ENCODE measurements at regions of chrX and their contacts with region 1.

Region 1: GRCh38 chrX:86806788-86807187 is 658.5 kb downstream of the DACH2 start:
- DNase-seq: peak; percentile 3
- ATAC-seq: no peak
- H3K4me3 ChIP-seq: no peak overlapping the region
- H3K27ac ChIP-seq: no peak overlapping the region
- H3K4me1 ChIP-seq: no peaks in the 10 kb centered on the region
- H3K27me3 ChIP-seq: no peaks in the 10 kb centered on the region
- CTCF ChIP-seq: 0 out of 2 replicates have a peak, but pooled peaks have one; percentile 21
- POLR2A ChIP-seq: no peak
- RAD21 ChIP-seq: no peak

Region 2: DNA sequence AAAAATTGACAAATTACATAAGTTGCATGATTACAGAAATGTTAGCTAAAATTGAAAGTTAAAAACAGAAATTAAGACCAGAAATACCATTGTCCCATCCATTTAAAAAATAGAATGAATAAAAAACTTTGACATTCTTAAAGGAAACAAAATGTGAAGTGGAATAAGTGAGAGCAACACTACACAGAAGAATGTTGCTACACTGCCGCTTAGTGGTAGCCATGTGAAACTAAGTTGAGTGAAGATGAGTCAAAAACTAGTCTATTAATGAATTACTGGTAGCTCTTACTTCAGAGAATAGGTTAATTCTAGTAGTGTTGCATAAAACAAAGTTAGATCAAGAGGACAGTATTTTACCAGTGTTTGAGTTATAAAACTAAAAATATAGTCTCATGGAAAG is 139.8 kb after region 1 on chrX:
- CTCF ChIA-PET with region 1: no interaction called
- POLR2A ChIA-PET with region 1: no interaction called
- dilution Hi-C with region 1: no loop called
- in situ Hi-C with region 1: no loop called
- intact Hi-C with region 1: loop called (anchors 10 kb)
- DNase-seq: peak; percentile 24
- ATAC-seq: peak; percentile 73
- H3K4me3 ChIP-seq: no peak overlapping the region
- H3K27ac ChIP-seq: no peak overlapping the region
- H3K4me1 ChIP-seq: no peaks in the 10 kb centered on the region
- H3K27me3 ChIP-seq: no peaks in the 10 kb centered on the region
- CTCF ChIP-seq: peak; percentile 59
- POLR2A ChIP-seq: no peak
- RAD21 ChIP-seq: peak; percentile 53

Region 3: DNA sequence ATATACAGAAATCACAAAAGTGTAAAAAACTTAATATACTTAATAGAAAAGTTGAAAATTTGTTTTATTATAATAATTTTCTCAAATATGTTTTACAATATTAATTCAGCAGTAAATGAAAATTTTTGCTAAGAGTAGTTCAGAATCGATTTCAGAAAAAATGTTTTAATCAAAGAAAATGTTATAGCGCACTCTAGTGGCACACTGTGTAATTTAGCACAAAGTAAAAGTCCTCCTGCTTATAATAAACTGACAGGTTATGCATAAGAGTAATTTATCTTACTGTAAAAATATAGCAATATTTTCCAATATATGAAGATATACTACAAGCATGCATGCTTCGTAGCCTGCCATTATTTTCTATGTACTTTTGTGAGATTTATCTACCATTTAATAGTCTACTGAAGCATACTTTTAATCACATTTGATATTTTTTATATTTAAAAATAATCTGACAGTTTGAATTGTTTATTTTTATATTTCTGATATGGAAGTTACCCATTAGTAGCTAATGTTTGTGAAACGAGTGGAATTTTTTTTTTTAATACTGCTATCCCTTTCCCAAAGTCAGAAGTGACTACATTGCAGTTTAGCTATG is 492.9 kb after region 1 on chrX:
- CTCF ChIA-PET with region 1: no interaction called
- POLR2A ChIA-PET with region 1: no interaction called
- dilution Hi-C with region 1: no loop called
- in situ Hi-C with region 1: no loop called
- intact Hi-C with region 1: loop called (anchors 5 kb)
- DNase-seq: peak; percentile 8
- ATAC-seq: no peak
- H3K4me3 ChIP-seq: no peak overlapping the region
- H3K27ac ChIP-seq: no peak overlapping the region
- H3K4me1 ChIP-seq: no peaks in the 10 kb centered on the region
- H3K27me3 ChIP-seq: no peaks in the 10 kb centered on the region
- CTCF ChIP-seq: peak; percentile 61
- POLR2A ChIP-seq: no peak
- RAD21 ChIP-seq: peak; percentile 31; the same call in 1 of the 2 replicates

Measured in IMR-90 (cell line).